ENCODE measurements at regions of chr5 and their contacts with region 1.

Region 1: GRCh38 chr5:80487829-80488721 is at the start of gene FAM151B:
- DNase-seq: peak; percentile 81 to 90
- ATAC-seq: peak; percentile 97 to 98 (median 98)
- H3K4me3 ChIP-seq: peak within 1 kb of the TSS; percentile 86
- H3K27ac ChIP-seq: peak within 1 kb of the TSS; percentile 71
- H3K4me1 ChIP-seq: peaks cover 7% of the 10 kb centered on the region
- H3K27me3 ChIP-seq: no peaks in the 10 kb centered on the region
- CTCF ChIP-seq: peak; percentile 6
- total RNA-seq, gene FAM151B: 0.63 to 1.4 (median 1.1) TPM

Region 2: DNA sequence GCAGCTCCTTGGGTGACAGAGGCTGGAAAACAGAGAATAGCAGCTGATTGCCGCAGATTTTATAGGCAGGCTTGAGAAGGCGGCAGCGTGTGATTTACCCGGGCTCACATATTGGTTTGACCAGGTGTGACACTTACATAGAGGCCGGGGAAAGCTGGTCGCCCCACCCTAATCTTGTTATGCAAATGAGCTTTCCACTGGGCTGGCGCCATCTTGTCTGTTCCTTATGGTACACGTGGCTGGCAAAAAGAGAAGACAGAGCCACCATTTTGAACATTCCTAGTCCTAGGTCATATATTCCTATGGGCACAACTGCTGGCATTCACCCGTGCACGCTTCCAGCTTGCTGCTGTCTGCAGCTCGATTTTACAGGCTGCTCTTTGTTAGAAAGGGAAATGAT is 179.5 kb before region 1 on chr5:
- intact Hi-C with region 1: loop called in 1 of 2 experiments (anchors 5 kb)
- DNase-seq: no peak
- ATAC-seq: no peak
- H3K4me3 ChIP-seq: no peak overlapping the region
- H3K27ac ChIP-seq: no peak overlapping the region
- H3K4me1 ChIP-seq: no peaks in the 10 kb centered on the region
- H3K27me3 ChIP-seq: no peaks in the 10 kb centered on the region
- CTCF ChIP-seq: no peak

Region 3: DNA sequence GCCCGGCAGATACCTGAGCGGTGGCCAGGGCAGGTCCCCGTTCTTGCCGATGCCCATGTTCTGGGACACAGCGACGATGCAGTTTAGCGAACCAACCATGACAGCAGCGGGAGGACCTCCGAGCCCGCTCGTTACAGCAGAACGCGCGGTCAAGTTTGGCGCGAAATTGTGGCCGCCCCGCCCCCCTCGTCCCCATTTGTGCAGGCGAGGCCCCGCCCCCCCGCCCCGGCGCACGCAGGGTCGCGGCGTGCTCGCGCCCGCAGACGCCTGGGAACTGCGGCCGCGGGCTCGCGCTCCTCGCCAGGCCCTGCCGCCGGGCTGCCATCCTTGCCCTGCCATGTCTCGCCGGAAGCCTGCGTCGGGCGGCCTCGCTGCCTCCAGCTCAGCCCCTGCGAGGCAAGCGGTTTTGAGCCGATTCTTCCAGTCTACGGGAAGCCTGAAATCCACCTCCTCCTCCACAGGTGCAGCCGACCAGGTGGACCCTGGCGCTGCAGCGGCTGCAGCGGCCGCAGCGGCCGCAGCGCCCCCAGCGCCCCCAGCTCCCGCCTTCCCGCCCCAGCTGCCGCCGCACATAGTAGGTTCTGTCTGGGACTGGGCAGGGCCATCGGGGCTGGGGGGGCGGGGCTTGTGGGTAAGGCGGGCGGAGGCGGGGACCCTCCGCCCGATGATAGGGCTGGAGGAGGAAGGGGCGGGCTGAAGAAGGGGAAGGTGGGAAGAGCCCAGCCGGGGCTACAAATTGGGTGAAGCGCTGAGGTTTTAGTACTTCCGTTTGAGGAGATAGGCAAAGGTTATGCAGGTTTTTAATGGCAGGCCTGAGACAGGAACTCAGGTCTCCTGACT is 166.5 kb after region 1 on chr5 and contains the starts of genes DHFR and MSH3:
- intact Hi-C with region 1: loop called (anchors 5 kb)
- DNase-seq: peak; percentile 88 to 93
- ATAC-seq: peak; percentile 56 to 95 (median 84)
- H3K4me3 ChIP-seq: peak within 1 kb of the TSS; percentile 96
- H3K27ac ChIP-seq: peak within 1 kb of the TSS; percentile 94
- H3K4me1 ChIP-seq: peaks cover 11% of the 10 kb centered on the region
- H3K27me3 ChIP-seq: no peaks in the 10 kb centered on the region
- CTCF ChIP-seq: no peak
- total RNA-seq, gene DHFR: 4.4 to 13.2 (median 12.0) TPM
- total RNA-seq, gene MSH3: 5.2 to 12.6 (median 10.7) TPM

Region 4: GRCh38 chr5:80672140-80672736 is 184.2 kb after region 1 on chr5:
- intact Hi-C with region 1: loop called in 1 of 2 experiments (anchors 5 kb)
- DNase-seq: peak; percentile 53 to 66
- ATAC-seq: peak in 3 of 4 donors; percentile 61 to 80 (median 70)
- H3K4me3 ChIP-seq: no peak overlapping the region
- H3K27ac ChIP-seq: no peak overlapping the region
- H3K4me1 ChIP-seq: no peaks in the 10 kb centered on the region
- H3K27me3 ChIP-seq: no peaks in the 10 kb centered on the region
- CTCF ChIP-seq: peak; percentile 71